Aorta (tissue), 5 donors: ENCODE measurements at regions of chr10 and their contacts with region 1.

Region 1: GRCh38 chr10:24642622-24643417 is 80.9 kb downstream of the ARHGAP21 start:
- DNase-seq: no peak
- ATAC-seq: peak; percentile 91
- H3K4me3 ChIP-seq: no peak overlapping the region
- H3K27ac ChIP-seq: no peak overlapping the region
- H3K4me1 ChIP-seq: peaks cover 1 to 6% of the 10 kb centered on the region in 2 donors
- H3K27me3 ChIP-seq: no peaks in the 10 kb centered on the region

Region 2: GRCh38 chr10:23892296-23892695 is 750.5 kb before region 1 on chr10:
- intact Hi-C with region 1: no loop called
- DNase-seq: no peak
- ATAC-seq: no peak
- H3K4me3 ChIP-seq: no peak overlapping the region
- H3K27ac ChIP-seq: no peak overlapping the region
- H3K4me1 ChIP-seq: no peaks in the 10 kb centered on the region
- H3K27me3 ChIP-seq: no peaks in the 10 kb centered on the region

Region 3: DNA sequence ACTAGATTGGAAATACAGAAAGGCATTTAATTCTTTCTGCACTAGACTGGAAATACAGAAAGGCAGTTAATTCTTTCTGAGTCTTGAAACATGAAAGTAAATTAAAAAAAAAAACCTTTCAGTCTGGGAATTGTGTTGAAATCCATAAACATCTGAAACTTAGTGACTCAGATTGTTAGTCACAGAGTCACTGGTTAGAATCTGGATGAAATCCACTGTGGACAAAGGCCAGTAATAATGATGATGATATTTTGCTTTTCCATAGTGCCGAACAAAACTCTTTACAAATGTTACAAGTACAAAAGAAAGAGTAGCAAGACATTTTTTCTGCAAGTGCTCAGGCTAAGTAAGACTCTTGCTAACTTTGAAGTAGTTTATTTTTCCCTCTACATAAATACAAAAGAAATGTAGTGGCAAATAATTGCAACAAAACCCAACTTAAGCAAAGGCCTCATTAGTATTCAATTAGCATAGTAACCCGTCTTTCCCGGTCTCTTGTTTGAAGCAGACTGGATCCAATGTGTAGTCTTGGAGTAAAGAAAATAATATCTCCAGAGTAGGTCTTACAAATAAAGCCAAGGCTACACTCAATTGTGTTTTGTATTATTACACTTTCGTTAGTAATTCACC is 315.4 kb after region 1 on chr10:
- intact Hi-C with region 1: loop called in 1 of 2 experiments (anchors 2 kb)
- DNase-seq: no peak
- ATAC-seq: peak; percentile 86
- H3K4me3 ChIP-seq: no peak overlapping the region
- H3K27ac ChIP-seq: peak overlapping the region; percentile 7 to 67
- H3K4me1 ChIP-seq: no peaks in the 10 kb centered on the region
- H3K27me3 ChIP-seq: no peaks in the 10 kb centered on the region

Region 4: GRCh38 chr10:24989867-24990266 is 347.0 kb after region 1 on chr10:
- intact Hi-C with region 1: loop called (anchors 5 kb)
- DNase-seq: no peak
- ATAC-seq: no peak
- H3K4me3 ChIP-seq: no peak overlapping the region
- H3K27ac ChIP-seq: no peak overlapping the region
- H3K4me1 ChIP-seq: no peaks in the 10 kb centered on the region
- H3K27me3 ChIP-seq: no peaks in the 10 kb centered on the region

Region 5: DNA sequence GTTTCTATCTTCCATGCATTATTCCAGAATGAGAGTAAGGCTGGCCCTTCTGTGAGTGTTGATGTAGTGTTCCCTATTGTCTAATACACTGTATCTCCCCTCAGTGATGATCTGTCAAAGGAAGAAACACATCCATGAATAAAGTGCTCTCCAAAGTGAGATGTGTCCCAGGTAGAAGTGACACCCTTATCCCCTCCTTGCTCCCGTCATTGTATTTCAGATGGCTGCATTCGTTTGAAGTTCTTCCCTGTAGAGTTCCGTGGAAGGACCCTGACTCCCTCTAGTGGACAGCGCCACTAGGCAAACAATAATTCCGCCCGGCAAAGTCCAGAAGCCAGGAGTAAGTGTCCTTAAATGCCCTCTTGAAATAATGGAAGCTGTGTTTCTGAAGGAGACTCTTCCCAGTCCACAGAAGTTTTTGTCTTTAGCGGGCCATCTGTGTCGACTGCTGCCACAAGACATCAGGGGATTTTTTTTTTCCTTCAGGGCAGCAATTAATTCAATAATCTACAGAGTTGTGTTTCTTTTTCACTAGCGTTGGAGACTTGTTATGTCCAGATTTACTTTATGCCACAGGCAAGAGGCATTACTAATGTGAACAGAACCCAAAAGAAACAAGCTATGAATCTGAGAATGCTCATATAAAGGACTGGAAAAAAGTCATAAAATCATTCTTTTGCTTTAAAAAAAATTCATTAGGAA is 438.2 kb after region 1 on chr10:
- intact Hi-C with region 1: loop called (anchors 5 kb)
- DNase-seq: peak; percentile 87 to 90
- ATAC-seq: peak; percentile 93
- H3K4me3 ChIP-seq: no peak overlapping the region
- H3K27ac ChIP-seq: peak overlapping the region in 1 of 2 donors; percentile 79
- H3K4me1 ChIP-seq: peaks cover 1 to 10% of the 10 kb centered on the region in 2 donors
- H3K27me3 ChIP-seq: no peaks in the 10 kb centered on the region